CD4-positive, alpha-beta T cell (primary cell): ENCODE measurements at regions of chr1 and their contacts with region 1.

Region 1: GRCh38 chr1:116737020-116737854 is 17.0 kb upstream of the CD2 start:
- DNase-seq: peak; percentile 66 to 90 (median 73)
- ATAC-seq: peak; percentile 67
- H3K4me3 ChIP-seq: peak overlapping the region; percentile 28
- H3K4me3 Mint-ChIP-seq: peak overlapping the region; percentile 76
- H3K27ac ChIP-seq: peak overlapping the region; percentile 93 to 98
- H3K27ac Mint-ChIP-seq: peak overlapping the region; percentile 99
- H3K4me1 ChIP-seq: peaks cover 57% of the 10 kb centered on the region
- H3K4me1 Mint-ChIP-seq: peaks cover 45% of the 10 kb centered on the region
- H3K27me3 ChIP-seq: no peaks in the 10 kb centered on the region
- H3K27me3 Mint-ChIP-seq: no peaks in the 10 kb centered on the region
- CTCF ChIP-seq: peak; percentile 97

Region 2: DNA sequence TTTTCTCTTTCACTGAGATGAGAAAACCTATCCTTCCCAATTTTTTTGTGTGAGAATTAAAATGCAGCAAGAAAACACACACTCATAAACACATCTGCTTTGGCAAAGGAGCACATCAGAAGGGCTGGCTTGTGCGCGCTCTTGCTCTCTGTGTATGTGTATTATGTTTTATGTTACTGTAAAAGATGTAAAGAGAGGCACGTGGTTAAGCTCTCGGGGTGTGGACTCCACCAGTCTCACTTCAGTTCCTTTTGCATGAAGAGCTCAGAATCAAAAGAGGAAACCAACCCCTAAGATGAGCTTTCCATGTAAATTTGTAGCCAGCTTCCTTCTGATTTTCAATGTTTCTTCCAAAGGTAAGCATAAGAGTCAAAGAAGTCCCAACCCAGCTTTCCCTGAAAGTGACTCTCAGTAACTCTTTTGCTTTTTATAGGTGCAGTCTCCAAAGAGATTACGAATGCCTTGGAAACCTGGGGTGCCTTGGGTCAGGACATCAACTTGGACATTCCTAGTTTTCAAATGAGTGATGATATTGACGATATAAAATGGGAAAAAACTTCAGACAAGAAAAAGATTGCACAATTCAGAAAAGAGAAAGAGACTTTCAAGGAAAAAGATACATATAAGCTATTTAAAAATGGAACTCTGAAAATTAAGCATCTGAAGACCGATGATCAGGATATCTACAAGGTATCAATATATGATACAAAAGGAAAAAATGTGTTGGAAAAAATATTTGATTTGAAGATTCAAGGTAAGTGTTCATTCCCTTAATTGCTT is 17.2 kb after region 1 on chr1 and contains the start of gene CD2:
- CTCF ChIA-PET with region 1: interaction called, 33 read pairs
- POLR2A ChIA-PET with region 1: interaction called, 149 read pairs
- intact Hi-C with region 1: loop called (anchors 1 kb)
- DNase-seq: peak in 11 of 14 experiments; percentile 47 to 82 (median 60)
- ATAC-seq: peak; percentile 86
- H3K4me3 ChIP-seq: peak within 1 kb of the TSS; percentile 78
- H3K4me3 Mint-ChIP-seq: peak within 1 kb of the TSS; percentile 97
- H3K27ac ChIP-seq: peak within 1 kb of the TSS; percentile 81 to 82
- H3K27ac Mint-ChIP-seq: peak within 1 kb of the TSS; percentile 99
- H3K4me1 ChIP-seq: peaks cover 19% of the 10 kb centered on the region
- H3K4me1 Mint-ChIP-seq: peaks cover 59% of the 10 kb centered on the region
- H3K27me3 ChIP-seq: no peaks in the 10 kb centered on the region
- H3K27me3 Mint-ChIP-seq: no peaks in the 10 kb centered on the region
- CTCF ChIP-seq: peak; percentile 13
- total RNA-seq, gene CD2: 150 to 151 TPM

Region 3: DNA sequence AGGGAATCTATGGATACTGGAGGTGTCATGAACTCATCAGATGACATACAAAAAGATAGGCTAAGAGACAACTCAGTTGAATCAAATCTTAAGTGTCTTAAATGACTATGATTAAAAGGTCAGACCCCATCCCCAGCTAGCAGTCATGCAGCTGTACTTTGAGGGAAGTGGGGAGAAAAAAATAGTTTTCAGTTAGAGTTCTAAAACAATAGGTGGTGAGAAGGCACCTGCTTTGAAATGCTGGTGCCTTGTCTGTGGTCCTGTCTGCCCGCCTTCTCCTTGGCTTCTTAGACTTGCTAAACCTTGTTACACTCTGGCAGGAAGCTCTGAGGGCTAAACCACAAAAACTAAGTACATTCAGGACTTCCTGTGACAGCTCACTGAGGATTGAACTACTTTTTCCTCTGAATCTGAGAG is 32.3 kb after region 1 on chr1:
- CTCF ChIA-PET with region 1: interaction called, 62 read pairs
- POLR2A ChIA-PET with region 1: interaction called, 235 read pairs
- intact Hi-C with region 1: loop called in 1 of 2 experiments (anchors 1 kb)
- DNase-seq: peak in 13 of 14 experiments; percentile 60 to 94 (median 68)
- ATAC-seq: peak; percentile 79
- H3K4me3 ChIP-seq: no peak overlapping the region
- H3K4me3 Mint-ChIP-seq: peak overlapping the region; percentile 66
- H3K27ac ChIP-seq: peak overlapping the region; percentile 88 to 89
- H3K27ac Mint-ChIP-seq: peak overlapping the region; percentile 99
- H3K4me1 ChIP-seq: peaks cover 74% of the 10 kb centered on the region
- H3K4me1 Mint-ChIP-seq: peaks cover 97% of the 10 kb centered on the region
- H3K27me3 ChIP-seq: no peaks in the 10 kb centered on the region
- H3K27me3 Mint-ChIP-seq: no peaks in the 10 kb centered on the region
- CTCF ChIP-seq: no peak

Region 4: GRCh38 chr1:116806245-116806644 is 69.0 kb after region 1 on chr1:
- CTCF ChIA-PET with region 1: interaction called, 26 read pairs
- POLR2A ChIA-PET with region 1: interaction called, 15 read pairs
- intact Hi-C with region 1: no loop called
- DNase-seq: peak in 11 of 14 experiments; percentile 29 to 79 (median 48)
- ATAC-seq: peak; percentile 27
- H3K4me3 ChIP-seq: peak overlapping the region; percentile 9
- H3K4me3 Mint-ChIP-seq: peak overlapping the region; percentile 64
- H3K27ac ChIP-seq: peak overlapping the region; percentile 11 to 80
- H3K27ac Mint-ChIP-seq: peak overlapping the region; percentile 93
- H3K4me1 ChIP-seq: peaks cover 78% of the 10 kb centered on the region
- H3K4me1 Mint-ChIP-seq: peaks cover 90% of the 10 kb centered on the region
- H3K27me3 ChIP-seq: no peaks in the 10 kb centered on the region
- H3K27me3 Mint-ChIP-seq: no peaks in the 10 kb centered on the region
- CTCF ChIP-seq: no peak

Region 5: GRCh38 chr1:116934586-116935207 is 197.5 kb after region 1 on chr1:
- CTCF ChIA-PET with region 1: interaction called, 6 read pairs
- POLR2A ChIA-PET with region 1: interaction called, 4 read pairs
- intact Hi-C with region 1: loop called in 1 of 2 experiments (anchors 1 kb)
- DNase-seq: peak in 3 of 14 experiments; percentile 51 to 59 (median 58)
- ATAC-seq: no peak
- H3K4me3 ChIP-seq: no peak overlapping the region
- H3K4me3 Mint-ChIP-seq: no peak overlapping the region
- H3K27ac ChIP-seq: no peak overlapping the region
- H3K27ac Mint-ChIP-seq: peak overlapping the region; percentile 76
- H3K4me1 ChIP-seq: peaks cover 7% of the 10 kb centered on the region
- H3K4me1 Mint-ChIP-seq: peaks cover 25% of the 10 kb centered on the region
- H3K27me3 ChIP-seq: no peaks in the 10 kb centered on the region
- H3K27me3 Mint-ChIP-seq: no peaks in the 10 kb centered on the region
- CTCF ChIP-seq: peak; percentile 33